PC-3 (cell line): ENCODE measurements at regions of chr2 and their contacts with region 1.

Region 1: DNA sequence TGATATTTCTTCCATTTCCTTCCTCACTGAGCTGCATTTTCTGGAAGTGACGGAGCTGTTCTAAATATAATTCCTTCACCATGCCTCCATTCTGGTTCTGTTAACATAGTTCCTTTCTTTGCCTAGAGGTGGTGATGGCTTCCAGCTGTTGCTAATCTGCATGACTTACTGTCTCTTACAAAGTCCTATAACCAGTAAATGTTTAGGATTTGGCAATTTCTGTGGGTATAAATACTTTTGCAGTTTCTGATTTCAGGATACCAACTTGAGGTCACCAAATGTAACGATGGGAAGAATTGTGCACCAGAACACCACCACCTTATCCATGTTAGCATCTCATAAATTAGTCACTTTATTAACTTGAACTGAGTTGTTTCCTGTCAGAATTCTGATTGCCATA is 101.7 kb upstream of the FN1 start:
- DNase-seq: peak; percentile 74
- ATAC-seq: peak; percentile 47
- H3K4me3 ChIP-seq: no peak overlapping the region
- H3K27ac ChIP-seq: peak overlapping the region; percentile 84
- H3K4me1 ChIP-seq: peaks cover 41% of the 10 kb centered on the region
- H3K27me3 ChIP-seq: no peaks in the 10 kb centered on the region
- CTCF ChIP-seq: 0 out of 2 replicates have a peak, but pooled peaks have one; percentile 11

Region 2: DNA sequence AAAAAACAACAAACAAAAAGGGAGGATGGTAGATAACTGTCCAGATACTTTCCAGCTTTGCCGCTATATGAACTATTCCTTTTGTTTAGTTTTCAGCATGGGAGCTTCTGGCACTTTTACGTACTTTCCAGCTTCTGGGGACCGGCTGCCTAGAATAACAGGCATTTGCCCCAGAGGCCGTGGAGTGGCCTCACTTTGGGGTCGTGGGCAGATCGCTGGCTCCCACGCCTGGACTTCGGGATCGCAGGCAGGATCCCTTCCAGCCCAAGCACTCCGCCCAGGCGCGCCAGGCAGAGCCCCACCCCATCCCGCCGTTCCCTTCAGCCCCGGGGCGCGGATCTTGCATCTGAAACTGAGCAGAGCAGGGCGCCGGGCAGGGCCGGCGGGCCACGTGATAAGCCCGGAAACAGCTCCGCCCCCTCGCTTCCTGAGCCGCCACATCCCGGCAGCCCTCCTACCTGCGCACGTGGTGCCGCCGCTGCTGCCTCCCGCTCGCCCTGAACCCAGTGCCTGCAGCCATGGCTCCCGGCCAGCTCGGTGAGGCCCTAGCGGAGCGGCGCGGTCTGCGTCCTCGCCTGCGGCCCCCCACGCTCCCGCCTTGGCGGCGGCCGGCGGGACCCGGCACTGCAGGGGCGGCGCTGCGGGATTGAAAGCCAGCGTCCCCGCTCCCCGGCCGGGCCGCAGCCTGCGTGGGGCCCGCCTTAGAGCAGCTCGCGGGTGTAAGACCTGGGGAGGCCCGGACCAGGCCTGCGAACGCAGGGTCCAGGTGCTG is 225.8 kb before region 1 on chr2 and contains the start of gene ATIC:
- CTCF ChIA-PET with region 1: no interaction called
- POLR2A ChIA-PET with region 1: no interaction called
- intact Hi-C with region 1: loop called (anchors 10 kb)
- DNase-seq: peak; percentile 95
- ATAC-seq: peak; percentile 98
- H3K4me3 ChIP-seq: peak within 1 kb of the TSS; percentile 96
- H3K27ac ChIP-seq: peak within 1 kb of the TSS; percentile 72
- H3K4me1 ChIP-seq: peaks cover 49% of the 10 kb centered on the region
- H3K27me3 ChIP-seq: no peaks in the 10 kb centered on the region
- CTCF ChIP-seq: no peak
- total RNA-seq, gene ATIC: 41.7 and 78.8 TPM in 2 replicates

Region 3: DNA sequence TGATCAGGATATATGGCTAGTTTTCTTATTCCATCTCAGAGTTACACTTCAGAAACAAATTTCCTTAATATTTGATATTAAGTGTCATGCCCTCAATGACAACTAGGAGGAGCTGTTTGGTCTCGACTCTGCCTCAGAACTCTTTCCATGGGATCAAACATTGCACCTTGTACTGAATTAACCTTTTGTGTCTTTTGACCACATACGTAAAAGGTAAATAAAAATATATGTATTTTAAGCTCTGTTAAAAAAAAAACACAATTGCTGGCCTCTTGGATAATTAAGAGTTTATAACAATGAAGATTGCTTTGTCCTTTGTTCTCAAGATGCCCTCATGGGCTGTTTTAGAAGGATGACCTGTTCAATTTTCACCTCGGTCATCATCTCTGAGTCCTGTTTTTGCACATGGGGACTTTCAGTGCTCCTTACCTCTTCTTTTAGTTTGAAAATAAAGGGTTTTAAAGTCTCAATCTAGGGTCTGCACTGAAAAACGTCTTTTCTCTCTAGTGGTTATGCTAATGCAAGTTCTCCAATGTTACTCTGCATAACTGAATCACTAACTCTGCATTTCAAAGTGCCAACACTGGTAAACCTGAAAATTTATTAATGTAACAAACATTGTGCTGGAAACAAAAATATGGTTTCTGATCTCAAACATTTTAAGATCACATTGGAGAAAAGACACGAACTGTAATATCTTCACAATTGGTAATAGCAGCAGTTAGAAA is 82.9 kb before region 1 on chr2:
- CTCF ChIA-PET with region 1: no interaction called
- POLR2A ChIA-PET with region 1: no interaction called
- intact Hi-C with region 1: loop called (anchors 1 kb)
- DNase-seq: peak; percentile 70
- ATAC-seq: peak; percentile 37
- H3K4me3 ChIP-seq: no peak overlapping the region
- H3K27ac ChIP-seq: no peak overlapping the region
- H3K4me1 ChIP-seq: 0 out of 2 replicates have a peak, but pooled peaks cover 7% of the 10 kb centered on the region
- H3K27me3 ChIP-seq: no peaks in the 10 kb centered on the region
- CTCF ChIP-seq: peak; percentile 88

Region 4: DNA sequence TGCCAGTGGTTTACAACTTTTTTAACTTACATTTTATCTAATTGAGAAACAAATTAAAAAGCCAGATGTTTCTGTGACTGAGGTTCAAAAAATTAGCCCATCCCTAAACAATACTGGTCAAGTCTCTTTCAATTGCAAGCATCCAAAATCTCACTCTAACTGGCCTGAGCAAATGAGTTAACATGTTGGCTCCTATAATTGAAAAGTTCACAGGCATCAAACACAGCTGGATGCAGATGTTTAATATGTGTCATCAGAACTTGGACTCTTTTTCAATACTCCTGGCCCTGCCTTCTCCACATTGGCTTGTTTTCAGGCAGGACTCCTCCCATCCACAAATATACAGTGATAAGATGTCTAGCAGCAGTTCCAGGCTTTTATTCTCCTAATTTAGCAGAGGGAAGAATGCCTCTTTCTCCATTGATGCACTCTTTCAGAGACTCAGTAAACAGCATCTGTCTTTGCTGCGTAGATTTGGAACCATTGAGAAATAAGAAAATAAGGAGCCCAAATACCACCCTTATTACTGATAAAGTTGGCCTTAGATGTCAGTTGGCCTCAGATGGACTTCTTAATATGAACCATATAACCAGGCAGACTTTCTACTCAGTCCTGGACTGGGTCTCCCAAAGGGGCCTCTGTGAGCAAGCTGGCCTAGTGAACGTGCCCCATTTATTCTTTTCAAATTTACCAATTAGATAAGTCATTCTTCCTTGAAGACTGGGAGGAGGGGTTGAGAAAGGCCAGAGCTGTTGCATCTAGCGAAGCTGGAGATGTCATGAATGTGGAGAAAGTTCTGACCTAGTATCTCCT is 71.3 kb before region 1 on chr2:
- CTCF ChIA-PET with region 1: no interaction called
- POLR2A ChIA-PET with region 1: no interaction called
- intact Hi-C with region 1: no loop called
- DNase-seq: no peak
- ATAC-seq: no peak
- H3K4me3 ChIP-seq: no peak overlapping the region
- H3K27ac ChIP-seq: no peak overlapping the region
- H3K4me1 ChIP-seq: peaks cover 4% of the 10 kb centered on the region; the same call in 1 of the 2 replicates
- H3K27me3 ChIP-seq: no peaks in the 10 kb centered on the region
- CTCF ChIP-seq: no peak

Region 5: DNA sequence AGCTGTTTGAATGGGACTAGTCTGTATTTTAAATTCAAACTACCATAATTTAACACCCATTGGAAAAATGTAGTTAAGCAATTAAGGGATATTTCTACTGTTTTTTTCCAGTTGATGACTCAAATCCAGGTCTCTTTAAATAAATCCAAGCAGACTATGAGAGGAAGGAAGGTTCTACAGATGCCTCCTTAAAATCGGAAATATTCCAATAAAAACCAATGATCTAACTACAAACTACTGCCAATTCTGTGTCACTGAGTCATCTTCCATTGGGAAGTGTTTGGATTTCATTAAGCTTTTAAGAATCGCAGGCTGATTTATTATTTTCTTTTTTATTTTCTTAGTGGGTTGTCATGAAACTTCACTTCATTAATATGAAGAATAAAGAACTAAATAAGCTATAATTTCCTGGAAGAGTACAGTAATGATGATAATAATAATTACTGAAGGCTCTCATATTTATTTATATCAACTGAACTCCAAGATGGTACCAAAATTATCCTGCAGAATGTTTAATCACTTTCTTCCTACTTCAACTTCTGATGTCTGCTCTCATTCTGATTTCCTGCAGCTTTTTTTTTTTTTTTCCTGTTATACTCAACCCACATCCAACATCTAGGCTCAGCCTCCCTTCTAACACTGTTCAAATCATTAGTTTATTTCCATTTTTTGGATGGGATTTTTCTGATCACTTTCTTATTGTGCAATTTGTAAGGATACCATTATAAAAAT is 64.5 kb after region 1 on chr2:
- CTCF ChIA-PET with region 1: no interaction called
- POLR2A ChIA-PET with region 1: no interaction called
- intact Hi-C with region 1: loop called (anchors 5 kb)
- DNase-seq: peak; percentile 51
- ATAC-seq: peak; percentile 49; the same call in 1 of the 2 replicates
- H3K4me3 ChIP-seq: no peak overlapping the region
- H3K27ac ChIP-seq: no peak overlapping the region
- H3K4me1 ChIP-seq: peaks cover 9% of the 10 kb centered on the region
- H3K27me3 ChIP-seq: no peaks in the 10 kb centered on the region
- CTCF ChIP-seq: no peak

Region 6: GRCh38 chr2:215711471-215712034 is 173.9 kb after region 1 on chr2:
- CTCF ChIA-PET with region 1: no interaction called
- POLR2A ChIA-PET with region 1: no interaction called
- intact Hi-C with region 1: loop called (anchors 5 kb)
- DNase-seq: peak; percentile 95
- ATAC-seq: peak; percentile 92
- H3K4me3 ChIP-seq: peak overlapping the region; percentile 1; the same call in 1 of the 2 replicates
- H3K27ac ChIP-seq: peak overlapping the region; percentile 68
- H3K4me1 ChIP-seq: peaks cover 48% of the 10 kb centered on the region
- H3K27me3 ChIP-seq: no peaks in the 10 kb centered on the region
- CTCF ChIP-seq: no peak

Region 7: GRCh38 chr2:215751200-215751910 is 213.7 kb after region 1 on chr2:
- CTCF ChIA-PET with region 1: no interaction called
- POLR2A ChIA-PET with region 1: no interaction called
- intact Hi-C with region 1: loop called (anchors 2 kb)
- DNase-seq: peak; percentile 94
- ATAC-seq: peak; percentile 56
- H3K4me3 ChIP-seq: no peak overlapping the region
- H3K27ac ChIP-seq: peak overlapping the region; percentile 81
- H3K4me1 ChIP-seq: peaks cover 54% of the 10 kb centered on the region
- H3K27me3 ChIP-seq: no peaks in the 10 kb centered on the region
- CTCF ChIP-seq: no peak

Region 8: DNA sequence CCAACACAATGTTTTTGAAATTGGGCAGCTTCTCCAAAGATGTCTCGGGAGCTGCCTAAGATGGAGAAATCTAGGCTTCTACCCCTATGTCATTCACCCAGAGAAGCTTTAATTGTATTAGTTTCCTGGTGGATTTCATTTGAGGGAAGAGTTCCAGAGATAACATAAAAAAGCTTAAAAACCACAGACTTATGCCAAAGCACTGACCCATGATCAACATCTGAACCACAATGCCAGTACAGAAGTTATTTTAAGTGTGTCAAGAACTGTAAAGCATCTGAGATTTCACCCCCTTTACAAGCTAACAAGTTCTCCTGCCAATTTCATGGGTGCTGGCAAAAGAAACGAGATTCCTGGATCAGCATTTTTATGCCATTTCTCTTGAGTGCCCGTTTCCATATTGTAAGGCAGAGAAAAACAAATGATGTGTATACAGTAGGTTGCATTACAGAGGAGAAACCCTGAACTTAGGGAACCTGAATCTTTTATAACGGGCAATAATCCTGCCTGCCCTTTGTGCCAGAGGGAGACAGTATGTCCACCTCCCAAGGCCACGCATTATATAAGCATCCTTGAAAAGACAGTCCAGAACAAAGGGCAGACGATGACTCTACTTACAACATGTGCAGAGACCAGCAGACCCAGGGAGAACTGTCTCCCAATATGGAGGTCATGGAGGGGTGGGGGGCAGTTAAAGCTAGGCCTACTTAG is 431.7 kb after region 1 on chr2:
- CTCF ChIA-PET with region 1: no interaction called
- POLR2A ChIA-PET with region 1: no interaction called
- intact Hi-C with region 1: no loop called
- DNase-seq: peak; percentile 8
- ATAC-seq: no peak
- H3K4me3 ChIP-seq: no peak overlapping the region
- H3K27ac ChIP-seq: no peak overlapping the region
- H3K4me1 ChIP-seq: peaks cover 26% of the 10 kb centered on the region
- H3K27me3 ChIP-seq: no peaks in the 10 kb centered on the region
- CTCF ChIP-seq: no peak